ENCODE measurements at regions of chr11 and their contacts with region 1.

Region 1: DNA sequence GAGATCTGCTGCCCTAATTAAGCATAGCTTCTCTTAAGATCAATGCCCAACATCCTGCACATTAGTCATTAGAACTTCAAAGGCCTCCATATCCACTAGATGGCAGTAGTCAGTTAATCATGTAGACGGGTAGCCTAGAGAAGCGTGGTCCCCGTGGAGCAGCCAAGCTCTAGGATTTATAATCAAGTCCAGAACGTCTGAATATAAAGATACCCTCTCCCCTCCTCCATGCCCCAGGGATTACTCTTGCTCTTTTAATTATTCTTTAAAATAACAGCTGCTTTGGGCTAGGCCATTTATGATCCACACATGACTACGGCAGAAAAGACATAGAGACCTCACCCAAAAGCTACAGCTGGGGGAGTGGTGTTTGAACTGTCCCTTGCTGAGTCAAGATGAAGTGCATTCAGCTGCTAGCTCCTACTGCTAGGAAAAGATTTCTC is 327.6 kb upstream of the PLET1 start:
- DNase-seq: peak; percentile 69 to 76
- ATAC-seq: peak; percentile 83
- H3K4me3 ChIP-seq: no peak overlapping the region
- H3K27ac ChIP-seq: no peak overlapping the region
- H3K4me1 ChIP-seq: no peaks in the 10 kb centered on the region
- H3K27me3 ChIP-seq: peaks cover 0 to 2% of the 10 kb centered on the region in 2 donors

Region 2: GRCh38 chr11:112694813-112695212 is 106.5 kb after region 1 on chr11:
- intact Hi-C with region 1: no loop called
- DNase-seq: no peak
- ATAC-seq: no peak
- H3K4me3 ChIP-seq: no peak overlapping the region
- H3K27ac ChIP-seq: no peak overlapping the region
- H3K4me1 ChIP-seq: no peaks in the 10 kb centered on the region
- H3K27me3 ChIP-seq: no peaks in the 10 kb centered on the region

Region 3: GRCh38 chr11:112795142-112795815 is 207.0 kb after region 1 on chr11:
- intact Hi-C with region 1: loop called (anchors 5 to 10 kb)
- DNase-seq: peak in 1 of 2 donors; percentile 62
- ATAC-seq: no peak
- H3K4me3 ChIP-seq: no peak overlapping the region
- H3K27ac ChIP-seq: peak overlapping the region; percentile 29 to 79
- H3K4me1 ChIP-seq: no peaks in the 10 kb centered on the region
- H3K27me3 ChIP-seq: no peaks in the 10 kb centered on the region

Region 4: GRCh38 chr11:112961146-112961668 is 372.9 kb after region 1 on chr11 and contains the start of gene NCAM1:
- intact Hi-C with region 1: loop called in 1 of 2 experiments (anchors 10 kb)
- DNase-seq: peak; percentile 59 to 82
- ATAC-seq: peak; percentile 62
- H3K4me3 ChIP-seq: peak within 1 kb of the TSS; percentile 58 to 72
- H3K27ac ChIP-seq: no peak within 1 kb of the TSS
- H3K4me1 ChIP-seq: no peaks in the 10 kb centered on the region
- H3K27me3 ChIP-seq: no peaks in the 10 kb centered on the region
- total RNA-seq, gene NCAM1: 10.2 to 19.4 TPM

Region 5: DNA sequence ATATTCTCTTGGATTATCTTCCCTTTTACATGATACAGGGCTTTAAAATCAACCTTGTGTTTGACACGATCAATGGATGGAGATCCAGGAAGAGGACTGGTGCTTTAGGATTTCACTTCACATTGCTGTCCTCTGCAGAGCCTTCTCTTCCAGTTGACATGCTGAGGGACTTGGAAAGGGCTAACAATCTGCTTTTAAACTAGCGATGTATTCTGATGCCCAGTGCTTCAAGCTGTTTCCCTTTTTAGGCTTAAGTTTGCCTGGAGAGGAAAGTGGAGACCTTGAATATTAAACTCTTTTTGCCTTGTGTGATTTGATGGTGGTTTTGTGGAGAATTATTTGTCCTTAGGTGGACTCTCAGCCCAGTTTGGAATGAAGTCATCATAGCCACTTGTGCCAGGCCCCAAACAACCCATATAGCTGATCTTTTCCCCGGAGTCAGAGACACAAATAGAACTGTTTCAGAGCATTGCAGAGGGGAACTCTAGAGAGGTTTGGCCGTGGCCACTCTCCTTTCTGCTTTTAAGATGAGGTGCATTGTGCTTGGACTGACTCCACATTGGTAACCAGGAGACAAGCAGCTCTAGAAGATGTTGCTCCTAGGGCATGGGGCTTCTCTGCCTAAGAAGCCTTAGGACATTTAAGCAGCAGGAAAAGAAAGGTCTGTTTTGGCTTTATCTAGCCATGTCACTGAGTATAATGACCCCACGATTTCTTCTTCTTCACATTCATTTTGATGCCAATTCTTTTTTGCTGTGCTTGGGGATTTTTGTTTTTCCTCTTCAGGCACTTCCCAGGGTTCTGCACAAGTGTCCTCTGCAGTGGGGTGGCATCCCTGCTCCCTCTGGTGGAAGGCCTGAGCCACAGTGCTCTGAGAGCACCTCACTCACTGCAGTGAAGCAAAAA is 525.8 kb after region 1 on chr11:
- intact Hi-C with region 1: loop called in 1 of 2 experiments (anchors 5 kb)
- DNase-seq: peak; percentile 65 to 77
- ATAC-seq: peak; percentile 89
- H3K4me3 ChIP-seq: peak overlapping the region in 1 of 2 donors; percentile 5
- H3K27ac ChIP-seq: peak overlapping the region; percentile 71 to 93
- H3K4me1 ChIP-seq: peaks cover 4 to 7% of the 10 kb centered on the region in 2 donors
- H3K27me3 ChIP-seq: no peaks in the 10 kb centered on the region

Region 6: GRCh38 chr11:113289431-113290187 is 701.3 kb after region 1 on chr11:
- intact Hi-C with region 1: loop called (anchors 2 kb)
- DNase-seq: peak; percentile 71 to 85
- ATAC-seq: peak; percentile 72
- H3K4me3 ChIP-seq: no peak overlapping the region
- H3K27ac ChIP-seq: no peak overlapping the region
- H3K4me1 ChIP-seq: no peaks in the 10 kb centered on the region
- H3K27me3 ChIP-seq: no peaks in the 10 kb centered on the region